ENCODE measurements at regions of chr1 and their contacts with region 1.

Region 1: DNA sequence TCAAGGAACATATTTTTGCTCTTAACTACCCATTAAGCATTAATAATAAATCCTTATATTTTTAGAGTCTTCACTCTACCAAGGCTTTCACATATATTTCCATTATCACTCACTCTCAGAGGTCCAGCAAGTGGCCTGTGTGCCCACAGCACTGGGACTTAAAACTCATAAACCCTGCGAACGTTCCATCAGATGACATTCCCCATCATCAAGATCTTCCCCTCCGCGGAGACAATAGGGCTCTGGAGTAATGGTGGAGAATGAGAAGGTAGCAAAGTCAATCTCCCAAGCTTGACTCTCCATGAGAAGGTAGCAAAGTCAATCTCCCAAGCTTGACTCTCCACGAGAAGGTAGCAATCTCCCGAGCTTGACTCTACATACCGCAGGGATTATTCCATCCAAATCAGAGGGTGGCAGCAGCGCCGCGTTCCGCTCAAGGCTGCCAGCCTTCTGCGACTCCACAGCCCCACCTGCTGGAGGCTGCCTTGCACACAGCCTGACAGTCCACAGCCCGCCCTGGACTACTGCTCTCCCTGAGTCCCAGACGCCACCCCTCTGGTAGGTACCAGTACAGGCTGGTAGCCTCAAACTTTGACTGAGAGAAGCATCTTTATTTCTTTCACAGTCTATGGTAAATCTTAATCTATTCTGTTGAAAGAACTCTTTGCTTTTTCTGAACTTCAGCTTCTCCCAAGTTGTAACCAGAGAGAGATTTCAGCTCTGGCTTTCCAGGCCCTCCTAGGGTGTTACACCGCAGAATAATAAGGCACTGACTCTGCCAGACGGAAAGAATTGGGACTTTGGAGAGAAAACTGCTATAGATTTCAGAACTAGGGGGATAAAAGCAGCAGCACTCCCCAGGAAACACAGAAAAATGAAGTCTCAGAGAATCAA is 26.4 kb upstream of the CTTNBP2NL start:
- DNase-seq: peak; percentile 71 to 89 (median 78)
- ATAC-seq: peak; percentile 100
- H3K4me3 ChIP-seq: no peak overlapping the region
- H3K4me3 Mint-ChIP-seq: no peak overlapping the region
- H3K27ac ChIP-seq: no peak overlapping the region
- H3K27ac Mint-ChIP-seq: no peak overlapping the region
- H3K4me1 ChIP-seq: peaks cover 4% of the 10 kb centered on the region
- H3K4me1 Mint-ChIP-seq: peaks cover 5% of the 10 kb centered on the region
- H3K27me3 ChIP-seq: peaks cover 20 to 27% of the 10 kb centered on the region in 2 experiments
- H3K27me3 Mint-ChIP-seq: peaks cover 53% of the 10 kb centered on the region
- CTCF ChIP-seq: peak; percentile 98

Region 2: GRCh38 chr1:112298558-112298957 is 71.1 kb before region 1 on chr1:
- CTCF ChIA-PET with region 1: no interaction called
- POLR2A ChIA-PET with region 1: no interaction called
- intact Hi-C with region 1: loop called (anchors 2 kb)
- DNase-seq: peak in 8 of 14 experiments; percentile 2 to 58 (median 8)
- ATAC-seq: no peak
- H3K4me3 ChIP-seq: no peak overlapping the region
- H3K4me3 Mint-ChIP-seq: no peak overlapping the region
- H3K27ac ChIP-seq: no peak overlapping the region
- H3K27ac Mint-ChIP-seq: no peak overlapping the region
- H3K4me1 ChIP-seq: no peaks in the 10 kb centered on the region
- H3K4me1 Mint-ChIP-seq: no peaks in the 10 kb centered on the region
- H3K27me3 ChIP-seq: no peaks in the 10 kb centered on the region
- H3K27me3 Mint-ChIP-seq: peaks cover 24% of the 10 kb centered on the region
- CTCF ChIP-seq: no peak

Region 3: DNA sequence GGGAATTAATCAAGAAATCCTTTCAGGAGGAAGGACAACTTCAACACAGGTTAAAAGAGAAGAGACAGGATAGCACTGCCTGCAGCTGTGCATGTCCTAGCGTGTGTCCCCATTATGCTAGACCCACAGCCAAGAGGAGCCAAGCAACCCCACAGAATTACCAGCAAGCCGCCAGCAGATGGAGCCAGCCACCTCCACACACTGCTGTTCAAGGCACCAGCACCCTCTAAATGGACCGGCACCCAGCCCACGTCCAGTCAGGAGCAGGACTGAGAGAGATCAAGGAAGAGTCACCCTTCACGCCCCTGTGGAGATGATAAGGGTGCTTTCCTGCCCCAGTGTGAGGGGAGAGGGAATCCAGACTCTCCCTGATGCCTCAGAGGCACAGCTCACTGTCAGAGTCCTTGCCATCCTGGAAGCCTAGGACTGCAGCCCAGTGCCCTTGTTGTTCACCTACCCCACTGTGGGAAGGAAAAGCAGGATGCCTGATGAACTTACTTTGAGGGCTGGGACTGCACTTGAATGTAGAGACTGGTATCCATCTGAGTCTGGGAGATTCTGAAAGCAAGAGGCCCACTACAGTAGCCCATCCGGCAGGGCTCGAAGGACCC is 10.7 kb before region 1 on chr1:
- CTCF ChIA-PET with region 1: interaction called, 10 read pairs
- POLR2A ChIA-PET with region 1: no interaction called
- intact Hi-C with region 1: no loop called
- DNase-seq: peak in 12 of 14 experiments; percentile 6 to 58 (median 28)
- ATAC-seq: peak; percentile 68
- H3K4me3 ChIP-seq: no peak overlapping the region
- H3K4me3 Mint-ChIP-seq: no peak overlapping the region
- H3K27ac ChIP-seq: no peak overlapping the region
- H3K27ac Mint-ChIP-seq: no peak overlapping the region
- H3K4me1 ChIP-seq: no peaks in the 10 kb centered on the region
- H3K4me1 Mint-ChIP-seq: no peaks in the 10 kb centered on the region
- H3K27me3 ChIP-seq: peaks cover 4 to 9% of the 10 kb centered on the region in 2 experiments
- H3K27me3 Mint-ChIP-seq: peaks cover 49% of the 10 kb centered on the region
- CTCF ChIP-seq: peak; percentile 69

Region 4: GRCh38 chr1:112516141-112516540 is 146.5 kb after region 1 on chr1:
- CTCF ChIA-PET with region 1: no interaction called
- POLR2A ChIA-PET with region 1: no interaction called
- intact Hi-C with region 1: no loop called
- DNase-seq: no peak
- ATAC-seq: no peak
- H3K4me3 ChIP-seq: no peak overlapping the region
- H3K4me3 Mint-ChIP-seq: no peak overlapping the region
- H3K27ac ChIP-seq: no peak overlapping the region
- H3K27ac Mint-ChIP-seq: no peak overlapping the region
- H3K4me1 ChIP-seq: no peaks in the 10 kb centered on the region
- H3K4me1 Mint-ChIP-seq: no peaks in the 10 kb centered on the region
- H3K27me3 ChIP-seq: no peaks in the 10 kb centered on the region
- H3K27me3 Mint-ChIP-seq: no peaks in the 10 kb centered on the region
- CTCF ChIP-seq: no peak

Region 5: GRCh38 chr1:112614460-112615065 is 244.9 kb after region 1 on chr1:
- CTCF ChIA-PET with region 1: no interaction called
- POLR2A ChIA-PET with region 1: no interaction called
- intact Hi-C with region 1: loop called in 1 of 2 experiments (anchors 1 kb)
- DNase-seq: peak in 4 of 14 experiments; percentile 25 to 63 (median 55)
- ATAC-seq: no peak
- H3K4me3 ChIP-seq: no peak overlapping the region
- H3K4me3 Mint-ChIP-seq: peak overlapping the region; percentile 75
- H3K27ac ChIP-seq: no peak overlapping the region
- H3K27ac Mint-ChIP-seq: peak overlapping the region; percentile 78
- H3K4me1 ChIP-seq: peaks cover 11% of the 10 kb centered on the region
- H3K4me1 Mint-ChIP-seq: peaks cover 25% of the 10 kb centered on the region
- H3K27me3 ChIP-seq: no peaks in the 10 kb centered on the region
- H3K27me3 Mint-ChIP-seq: no peaks in the 10 kb centered on the region
- CTCF ChIP-seq: peak; percentile 60

Measured in CD4-positive, alpha-beta T cell (primary cell).